ENCODE measurements at regions of chr2 and their contacts with region 1.

Region 1: GRCh38 chr2:176454893-176455811 is 185.9 kb downstream of the MTX2 start:
- DNase-seq: peak; percentile 94

Region 2: GRCh38 chr2:176508984-176509740 is 54.0 kb after region 1 on chr2:
- intact Hi-C with region 1: no loop called
- DNase-seq: no peak

Region 3: DNA sequence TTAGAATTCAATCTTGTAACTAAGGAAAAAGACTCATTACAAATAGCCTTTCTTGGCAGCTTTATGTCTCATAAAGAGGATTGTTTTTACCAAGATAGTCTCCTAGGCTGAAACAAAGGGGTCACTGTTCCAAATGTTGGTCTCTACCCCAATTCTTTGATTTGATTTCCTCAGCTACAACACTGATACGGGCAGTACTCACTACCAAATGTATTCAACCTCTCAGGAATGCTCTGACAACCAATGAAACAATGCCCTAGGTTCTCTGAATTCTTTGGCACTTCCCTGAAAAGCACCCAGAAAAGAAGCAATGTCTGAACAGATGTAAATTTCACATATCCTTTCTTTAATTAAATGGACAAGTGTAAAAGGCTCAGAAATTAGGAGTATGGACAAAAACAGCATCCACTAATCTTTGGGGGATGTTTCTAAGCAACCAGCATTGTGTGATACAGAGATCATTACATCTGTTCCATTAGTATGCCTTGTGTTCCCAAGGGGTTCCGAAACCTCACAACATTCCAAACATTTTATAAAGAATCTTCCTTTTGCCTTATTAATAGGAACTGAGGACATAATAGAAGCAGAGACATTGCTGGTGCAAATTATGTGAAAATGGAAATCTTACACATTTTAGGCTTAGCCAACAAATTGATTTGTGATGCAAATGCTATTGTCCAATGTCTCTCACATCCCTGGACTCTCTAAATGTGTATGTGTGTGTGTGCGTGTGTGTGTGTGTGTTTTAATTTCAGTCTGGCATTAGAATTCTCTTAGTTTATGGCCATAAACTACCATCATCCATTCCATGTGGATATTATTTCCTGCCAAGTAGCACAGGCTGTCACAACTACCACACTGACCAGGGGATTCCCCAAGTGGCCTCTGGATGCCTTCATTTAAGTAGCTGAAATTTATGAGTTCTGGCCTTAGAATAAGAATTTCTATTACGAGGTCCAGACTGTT is 90.1 kb after region 1 on chr2:
- intact Hi-C with region 1: loop called in 1 of 2 experiments (anchors 5 kb)
- DNase-seq: no peak

Region 4: DNA sequence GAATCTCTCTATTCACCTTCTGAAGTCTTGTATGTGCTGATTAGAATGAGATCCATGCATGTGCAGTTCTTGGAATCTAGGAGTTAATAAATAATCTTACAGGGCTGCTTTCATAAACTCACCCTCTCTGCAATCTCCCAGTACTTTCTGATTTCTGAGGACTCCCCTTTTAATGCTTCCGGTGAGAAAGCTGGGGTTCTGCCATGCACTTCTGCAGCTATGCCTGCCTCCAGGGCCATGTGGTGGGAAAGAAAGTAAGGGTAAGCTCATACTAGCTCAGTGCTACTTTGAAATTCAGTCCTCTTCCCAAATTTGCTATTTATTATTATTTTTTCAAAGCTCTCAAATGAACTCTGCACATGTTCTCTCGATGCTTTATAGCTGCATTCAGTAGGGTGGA is 247.0 kb after region 1 on chr2:
- intact Hi-C with region 1: no loop called
- DNase-seq: no peak